ENCODE measurements at regions of chr6 and their contacts with region 1.

Region 1: DNA sequence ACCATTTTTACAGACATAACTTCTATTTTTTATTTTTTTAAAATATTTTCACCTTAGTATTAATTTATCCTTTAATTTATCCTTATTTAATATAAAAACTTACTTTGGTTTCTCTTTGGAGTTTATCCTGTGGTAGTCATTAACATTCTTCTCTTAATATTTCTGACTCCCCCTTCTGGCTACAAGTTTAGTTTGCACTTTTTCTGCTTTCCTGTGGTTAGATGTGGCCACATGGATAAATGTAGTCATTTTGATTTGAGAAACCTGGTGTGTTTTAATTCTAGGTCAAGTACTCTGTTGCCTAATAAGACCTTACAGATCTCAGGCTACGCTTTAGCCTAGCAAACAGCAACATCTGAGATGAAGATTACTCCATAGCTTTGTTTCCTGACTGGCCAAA is 1187.5 kb downstream of the HACE1 start:
- DNase-seq: no peak
- H3K4me3 Mint-ChIP-seq: no peak overlapping the region
- H3K27ac Mint-ChIP-seq: no peak overlapping the region
- H3K4me1 Mint-ChIP-seq: peaks cover 12% of the 10 kb centered on the region
- H3K27me3 Mint-ChIP-seq: no peaks in the 10 kb centered on the region
- CTCF ChIP-seq: no peak

Region 2: GRCh38 chr6:103344554-103345163 is 327.5 kb before region 1 on chr6:
- CTCF ChIA-PET with region 1: no interaction called
- intact Hi-C with region 1: loop called (anchors 10 kb)
- DNase-seq: no peak
- H3K4me3 Mint-ChIP-seq: no peak overlapping the region
- H3K27ac Mint-ChIP-seq: no peak overlapping the region
- H3K4me1 Mint-ChIP-seq: no peaks in the 10 kb centered on the region
- H3K27me3 Mint-ChIP-seq: no peaks in the 10 kb centered on the region
- CTCF ChIP-seq: no peak

Measured in Calu3 (cell line).